Keratinocyte (primary cell): ENCODE measurements at regions of chr15 and their contacts with region 1.

Region 1: DNA sequence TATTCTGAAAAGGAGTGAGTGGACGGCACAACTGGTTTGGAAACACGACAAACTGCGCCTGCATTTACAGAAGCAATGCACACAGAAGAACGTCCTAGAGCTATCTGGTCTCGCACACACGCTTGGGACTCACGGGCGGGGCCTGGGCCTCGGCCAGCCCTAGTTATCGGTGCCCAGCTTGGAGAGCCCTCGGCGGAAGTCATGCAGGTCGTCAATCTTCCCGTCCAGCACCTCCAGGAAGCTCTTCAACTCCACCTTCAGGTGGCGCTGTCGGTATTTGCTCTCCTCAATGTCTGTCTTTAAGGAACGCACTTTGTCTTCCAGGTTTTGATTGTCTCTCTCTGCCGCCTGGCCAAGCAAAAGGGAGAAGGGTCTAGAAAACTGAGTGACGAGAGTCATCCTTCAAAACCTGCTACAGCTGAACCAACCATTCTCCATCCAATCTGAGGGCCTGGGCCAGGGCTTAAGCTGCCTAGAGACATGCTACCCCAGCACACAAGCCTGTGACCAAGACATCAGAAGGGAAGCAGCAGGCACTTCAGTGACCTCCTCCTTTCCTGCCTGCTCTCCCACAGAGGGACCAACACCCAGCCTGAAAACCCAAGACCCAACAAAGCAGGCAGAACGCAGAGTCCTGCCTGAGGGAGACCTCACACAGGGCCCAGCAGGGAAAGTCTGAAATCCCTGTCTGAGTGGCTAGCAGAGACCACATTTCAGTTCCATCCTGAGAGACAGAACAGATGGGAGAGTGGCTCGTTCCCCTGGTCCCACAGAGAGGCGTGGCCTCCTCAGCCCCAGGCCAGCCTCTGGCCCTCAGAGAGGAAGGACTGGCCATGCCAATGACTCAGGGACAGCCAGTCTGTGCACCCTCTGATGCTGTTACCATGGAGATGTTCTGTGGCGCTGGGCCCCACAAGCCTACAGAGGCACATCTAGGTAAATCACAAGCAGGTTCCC is 40.4 kb downstream of the WHAMM start:
- DNase-seq: peak; percentile 60
- H3K4me3 ChIP-seq: no peak overlapping the region
- H3K27ac ChIP-seq: no peak overlapping the region
- H3K4me1 ChIP-seq: peaks cover 18% of the 10 kb centered on the region
- H3K27me3 ChIP-seq: no peaks in the 10 kb centered on the region
- CTCF ChIP-seq: peak; percentile 87 to 96 (median 96)

Region 2: GRCh38 chr15:82900511-82901060 is 50.8 kb after region 1 on chr15:
- dilution Hi-C with region 1: no loop called
- DNase-seq: no peak
- H3K4me3 ChIP-seq: no peak overlapping the region
- H3K27ac ChIP-seq: no peak overlapping the region
- H3K4me1 ChIP-seq: no peaks in the 10 kb centered on the region
- H3K27me3 ChIP-seq: no peaks in the 10 kb centered on the region
- CTCF ChIP-seq: no peak

Region 3: GRCh38 chr15:82999905-83000671 is 150.3 kb after region 1 on chr15:
- dilution Hi-C with region 1: loop called (anchors 5 kb)
- DNase-seq: no peak
- H3K4me3 ChIP-seq: no peak overlapping the region
- H3K27ac ChIP-seq: no peak overlapping the region
- H3K4me1 ChIP-seq: no peaks in the 10 kb centered on the region
- H3K27me3 ChIP-seq: no peaks in the 10 kb centered on the region
- CTCF ChIP-seq: peak; percentile 39 to 57 (median 43)